CD8-positive, alpha-beta T cell (primary cell): ENCODE measurements at regions of chr12 and their contacts with region 1.

Region 1: GRCh38 chr12:48795480-48796455 is 6.9 kb upstream of the ADCY6 start:
- DNase-seq: peak in 8 of 9 experiments; percentile 34 to 74 (median 60)
- ATAC-seq: peak; percentile 90
- H3K4me3 ChIP-seq: no peak overlapping the region
- H3K4me3 Mint-ChIP-seq: no peak overlapping the region
- H3K27ac ChIP-seq: no peak overlapping the region
- H3K27ac Mint-ChIP-seq: no peak overlapping the region
- H3K4me1 ChIP-seq: no peaks in the 10 kb centered on the region
- H3K4me1 Mint-ChIP-seq: peaks cover 3% of the 10 kb centered on the region
- H3K27me3 ChIP-seq: peaks cover 0 to 4% of the 10 kb centered on the region in 2 experiments
- H3K27me3 Mint-ChIP-seq: peaks cover 15% of the 10 kb centered on the region
- CTCF ChIP-seq: peak; percentile 92

Region 2: DNA sequence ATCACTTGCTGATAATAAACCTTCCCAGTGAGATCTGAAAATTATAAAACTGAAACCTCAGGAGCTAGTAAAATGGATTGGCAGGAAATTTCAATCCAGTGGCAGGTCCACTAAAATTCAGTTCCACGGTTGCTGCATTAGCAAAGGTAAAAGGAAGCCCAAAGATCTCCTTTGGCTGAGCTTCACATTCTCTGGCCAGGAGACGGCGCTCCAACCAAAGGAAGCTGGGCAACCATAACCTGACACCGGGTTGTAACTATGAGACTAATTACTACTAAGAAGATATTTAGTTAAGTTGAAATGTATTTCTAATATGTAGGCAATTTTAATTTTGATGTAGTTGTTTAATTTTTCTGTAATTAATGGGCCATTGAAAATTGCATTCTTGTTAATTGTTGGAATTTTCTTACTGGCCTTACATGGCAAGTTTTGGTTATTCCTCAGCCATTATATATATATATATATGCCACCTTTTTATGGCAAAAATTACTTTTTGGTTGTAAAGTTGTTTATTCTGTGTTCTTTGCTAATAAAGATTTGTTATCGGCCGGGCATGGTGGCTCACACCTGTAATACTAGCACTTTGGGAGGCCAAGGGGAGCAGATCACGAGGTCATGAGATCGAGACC is 253.4 kb before region 1 on chr12:
- CTCF ChIA-PET with region 1: interaction called, 6 read pairs
- POLR2A ChIA-PET with region 1: no interaction called
- intact Hi-C with region 1: loop called in 1 of 2 experiments (anchors 1 kb)
- DNase-seq: peak in 8 of 9 experiments; percentile 7 to 57 (median 40)
- ATAC-seq: no peak
- H3K4me3 ChIP-seq: no peak overlapping the region
- H3K4me3 Mint-ChIP-seq: no peak overlapping the region
- H3K27ac ChIP-seq: no peak overlapping the region
- H3K27ac Mint-ChIP-seq: no peak overlapping the region
- H3K4me1 ChIP-seq: no peaks in the 10 kb centered on the region
- H3K4me1 Mint-ChIP-seq: peaks cover 3% of the 10 kb centered on the region
- H3K27me3 ChIP-seq: no peaks in the 10 kb centered on the region
- H3K27me3 Mint-ChIP-seq: no peaks in the 10 kb centered on the region
- CTCF ChIP-seq: peak; percentile 47

Region 3: DNA sequence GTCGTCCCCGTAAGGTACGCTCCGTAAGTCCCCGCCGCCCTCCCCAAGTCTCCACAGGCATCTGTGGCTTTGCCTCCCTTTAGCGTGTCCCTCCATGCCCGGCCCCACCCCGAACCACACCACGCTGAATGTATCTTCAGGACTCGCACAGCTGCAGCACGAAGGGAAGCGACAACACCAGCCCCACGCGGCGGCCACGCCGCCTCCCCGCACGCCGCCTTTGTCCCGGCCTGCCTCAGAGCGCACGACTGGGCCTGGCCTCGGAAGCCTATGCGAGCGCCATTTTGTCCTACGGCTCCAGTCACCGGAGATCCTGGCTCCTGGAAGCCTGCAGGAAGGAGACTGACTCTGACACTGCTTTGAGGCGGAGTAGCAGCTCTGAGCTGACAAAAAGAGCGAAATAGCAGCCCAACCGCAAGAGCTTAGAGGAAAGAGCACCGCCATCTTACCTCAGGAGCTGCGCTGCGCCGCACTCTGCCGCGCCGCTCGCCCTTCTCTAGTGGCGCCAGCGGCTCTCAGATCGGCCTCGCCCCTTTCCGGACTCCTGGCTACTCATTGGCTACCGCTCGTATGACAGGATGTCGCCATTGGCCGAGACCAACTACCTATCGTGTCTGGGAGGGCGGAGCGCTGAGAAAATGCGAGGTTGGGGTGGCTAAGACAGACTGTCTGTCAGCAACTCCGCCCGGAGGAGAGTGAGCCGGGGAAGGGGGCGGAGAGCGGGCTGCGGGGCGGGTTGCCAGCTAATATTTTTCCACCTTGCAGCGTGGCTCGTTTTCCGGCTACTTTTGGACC is 113.8 kb before region 1 on chr12 and contains the start of gene KANSL2:
- CTCF ChIA-PET with region 1: no interaction called
- POLR2A ChIA-PET with region 1: no interaction called
- intact Hi-C with region 1: loop called in 1 of 2 experiments (anchors 5 kb)
- DNase-seq: peak; percentile 93 to 99 (median 96)
- ATAC-seq: peak; percentile 94
- H3K4me3 ChIP-seq: peak within 1 kb of the TSS; percentile 66 to 91
- H3K4me3 Mint-ChIP-seq: peak within 1 kb of the TSS; percentile 95
- H3K27ac ChIP-seq: peak within 1 kb of the TSS; percentile 80 to 90
- H3K27ac Mint-ChIP-seq: peak within 1 kb of the TSS; percentile 98
- H3K4me1 ChIP-seq: peaks cover 45% of the 10 kb centered on the region
- H3K4me1 Mint-ChIP-seq: peaks cover 49% of the 10 kb centered on the region
- H3K27me3 ChIP-seq: no peaks in the 10 kb centered on the region
- H3K27me3 Mint-ChIP-seq: no peaks in the 10 kb centered on the region
- CTCF ChIP-seq: no peak
- total RNA-seq, gene KANSL2: 175 to 179 TPM

Region 4: GRCh38 chr12:48758221-48758620 is 37.5 kb before region 1 on chr12:
- CTCF ChIA-PET with region 1: interaction called, 149 read pairs
- POLR2A ChIA-PET with region 1: interaction called, 3 read pairs
- intact Hi-C with region 1: loop called (anchors 1 kb)
- DNase-seq: no peak
- ATAC-seq: no peak
- H3K4me3 ChIP-seq: no peak overlapping the region
- H3K4me3 Mint-ChIP-seq: no peak overlapping the region
- H3K27ac ChIP-seq: no peak overlapping the region
- H3K27ac Mint-ChIP-seq: no peak overlapping the region
- H3K4me1 ChIP-seq: no peaks in the 10 kb centered on the region
- H3K4me1 Mint-ChIP-seq: no peaks in the 10 kb centered on the region
- H3K27me3 ChIP-seq: no peaks in the 10 kb centered on the region
- H3K27me3 Mint-ChIP-seq: no peaks in the 10 kb centered on the region
- CTCF ChIP-seq: no peak

Region 5: DNA sequence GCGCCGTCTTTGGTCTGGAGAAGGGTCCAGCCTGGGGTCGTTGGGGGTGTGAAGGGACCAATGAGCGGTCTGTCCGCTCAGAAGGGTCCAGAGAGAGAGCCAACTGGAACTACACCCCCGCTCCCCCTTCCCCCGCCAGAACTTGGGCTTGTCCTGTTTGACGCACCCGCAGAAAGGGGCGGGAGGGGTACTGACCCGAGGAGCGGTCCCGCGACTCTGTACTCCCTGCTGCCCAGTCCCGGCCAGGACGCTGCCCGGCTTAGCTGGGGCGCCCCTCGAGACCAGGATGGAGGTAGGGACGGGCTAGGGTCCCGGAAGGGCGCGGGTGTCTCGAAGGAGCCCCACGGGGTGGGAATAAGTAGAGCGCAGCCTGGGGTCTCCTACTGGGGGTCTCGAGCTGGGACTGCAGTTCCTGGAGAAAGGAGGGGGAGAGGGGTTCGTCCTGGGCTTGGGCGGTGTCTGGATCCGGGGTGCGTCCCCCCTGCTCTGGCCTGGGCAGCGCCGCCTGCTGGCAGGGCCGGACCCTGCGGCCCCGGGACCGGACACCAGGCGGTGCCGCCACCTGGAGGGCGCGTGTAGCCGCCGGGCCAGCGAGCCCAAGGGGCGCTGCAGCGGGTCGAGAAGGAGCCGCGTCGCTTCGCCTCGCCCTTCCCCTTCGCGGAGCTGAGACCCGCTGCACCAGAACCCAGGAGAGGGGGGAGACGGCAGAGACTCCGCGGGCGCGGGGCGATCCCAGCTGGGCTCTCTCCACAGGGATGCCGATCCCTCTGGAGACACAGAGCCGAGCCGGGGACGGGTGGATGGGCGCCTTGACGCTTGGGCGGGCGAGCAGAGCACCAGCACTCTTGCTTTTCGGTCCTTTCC is 18.7 kb after region 1 on chr12:
- CTCF ChIA-PET with region 1: interaction called, 11 read pairs
- POLR2A ChIA-PET with region 1: no interaction called
- intact Hi-C with region 1: no loop called
- DNase-seq: peak; percentile 39 to 86 (median 70)
- ATAC-seq: peak; percentile 56
- H3K4me3 ChIP-seq: peak overlapping the region; percentile 73 to 88
- H3K4me3 Mint-ChIP-seq: peak overlapping the region; percentile 88
- H3K27ac ChIP-seq: peak overlapping the region in 1 of 2 experiments; percentile 40
- H3K27ac Mint-ChIP-seq: no peak overlapping the region
- H3K4me1 ChIP-seq: peaks cover 27% of the 10 kb centered on the region
- H3K4me1 Mint-ChIP-seq: peaks cover 36% of the 10 kb centered on the region
- H3K27me3 ChIP-seq: no peaks in the 10 kb centered on the region
- H3K27me3 Mint-ChIP-seq: peaks cover 8% of the 10 kb centered on the region
- CTCF ChIP-seq: peak; percentile 83

Region 6: DNA sequence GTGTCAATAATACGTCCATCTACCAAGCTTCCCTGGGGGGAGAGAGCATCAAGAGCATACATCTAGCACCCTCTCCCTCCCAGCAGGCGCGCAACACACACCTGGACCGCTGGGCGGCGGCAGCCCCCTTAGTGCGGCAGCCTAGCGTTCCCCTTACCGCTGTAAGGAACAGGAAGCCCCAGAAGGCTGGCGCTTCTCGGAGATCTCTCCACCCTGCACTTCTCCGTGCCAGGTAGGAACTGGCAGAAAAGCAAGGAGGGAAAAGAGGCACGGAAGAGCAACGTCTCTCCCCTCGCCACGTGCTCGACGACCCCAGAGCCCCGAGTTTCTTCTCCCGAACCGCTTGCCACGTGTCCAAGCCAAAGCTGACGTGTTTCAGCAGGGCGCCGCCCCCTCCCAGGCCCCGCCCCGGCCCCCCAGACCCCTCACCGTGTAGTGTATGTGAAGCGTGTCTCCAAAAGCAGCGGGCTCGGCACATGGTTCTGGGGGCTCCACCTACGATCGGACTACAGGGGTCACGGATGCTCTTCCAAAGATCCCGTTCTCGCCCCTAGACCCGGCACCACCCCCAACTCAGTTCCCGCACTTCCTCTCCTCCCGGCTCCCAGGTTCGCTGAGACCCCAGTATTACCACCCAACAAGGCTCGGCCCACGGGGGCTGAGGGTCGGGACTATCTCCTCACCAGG is 129.0 kb after region 1 on chr12:
- CTCF ChIA-PET with region 1: no interaction called
- POLR2A ChIA-PET with region 1: no interaction called
- intact Hi-C with region 1: no loop called
- DNase-seq: peak; percentile 65 to 90 (median 83)
- ATAC-seq: peak; percentile 69
- H3K4me3 ChIP-seq: peak overlapping the region; percentile 96 to 99
- H3K4me3 Mint-ChIP-seq: peak overlapping the region; percentile 97
- H3K27ac ChIP-seq: peak overlapping the region; percentile 94
- H3K27ac Mint-ChIP-seq: peak overlapping the region; percentile 97
- H3K4me1 ChIP-seq: peaks cover 24% of the 10 kb centered on the region
- H3K4me1 Mint-ChIP-seq: peaks cover 46% of the 10 kb centered on the region
- H3K27me3 ChIP-seq: no peaks in the 10 kb centered on the region
- H3K27me3 Mint-ChIP-seq: no peaks in the 10 kb centered on the region
- CTCF ChIP-seq: peak; percentile 78

Region 7: DNA sequence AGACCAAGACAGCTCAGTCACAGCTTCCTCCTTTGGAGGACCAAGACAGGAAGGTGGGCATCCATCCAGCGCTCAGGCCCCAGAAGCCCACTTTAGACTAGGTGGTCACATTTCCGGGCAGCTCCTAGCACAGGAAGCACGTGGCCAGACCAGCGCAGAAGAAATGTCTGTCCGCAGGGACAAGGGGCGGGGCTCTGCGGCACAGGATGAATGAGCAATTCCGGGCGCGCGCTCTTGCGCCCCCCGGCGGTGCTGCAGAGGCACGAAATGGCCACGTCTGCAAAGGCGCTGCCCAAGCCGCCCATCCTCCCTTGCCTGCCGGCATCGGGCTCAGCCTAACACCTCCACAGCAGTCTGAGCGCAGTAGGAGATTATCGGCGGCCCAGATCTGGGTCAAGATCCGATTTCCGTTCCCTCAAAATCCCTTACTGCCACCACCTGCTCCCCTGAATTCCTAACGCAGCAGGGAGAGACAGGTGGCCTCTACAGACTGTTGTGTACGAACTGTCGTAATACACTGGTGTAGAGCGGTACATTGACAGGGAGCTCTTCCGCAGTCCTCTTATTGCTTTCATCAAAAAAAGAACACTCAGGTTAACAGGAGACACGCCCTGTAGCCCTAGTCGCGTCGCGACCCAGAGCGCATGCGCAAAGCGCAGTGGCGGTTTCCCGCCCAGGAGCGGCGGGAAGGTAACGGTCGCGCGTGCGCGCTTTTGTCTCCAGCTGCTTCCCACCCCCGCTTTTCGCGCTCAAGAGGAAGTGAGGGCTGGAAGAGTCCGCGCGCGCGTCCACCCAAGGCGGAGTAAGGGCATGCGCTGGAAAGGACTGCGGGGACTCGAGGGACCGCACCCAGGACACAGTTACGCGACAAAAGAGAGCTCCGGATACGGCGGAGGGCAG is 334.6 kb after region 1 on chr12:
- CTCF ChIA-PET with region 1: no interaction called
- POLR2A ChIA-PET with region 1: no interaction called
- intact Hi-C with region 1: no loop called
- DNase-seq: peak; percentile 78 to 97 (median 92)
- ATAC-seq: peak; percentile 67
- H3K4me3 ChIP-seq: peak overlapping the region; percentile 88 to 91
- H3K4me3 Mint-ChIP-seq: peak overlapping the region; percentile 96
- H3K27ac ChIP-seq: peak overlapping the region; percentile 90 to 96
- H3K27ac Mint-ChIP-seq: peak overlapping the region; percentile 99
- H3K4me1 ChIP-seq: peaks cover 25% of the 10 kb centered on the region
- H3K4me1 Mint-ChIP-seq: peaks cover 47% of the 10 kb centered on the region
- H3K27me3 ChIP-seq: no peaks in the 10 kb centered on the region
- H3K27me3 Mint-ChIP-seq: no peaks in the 10 kb centered on the region
- CTCF ChIP-seq: peak; percentile 96